Testis (tissue), 5 donors: ENCODE measurements at regions of chr1 and their contacts with region 1.

Region 1: GRCh38 chr1:204363335-204364124 is 3.8 kb upstream of the PLEKHA6 start:
- DNase-seq: peak; percentile 80
- H3K4me3 ChIP-seq: peak overlapping the region; percentile 16 to 60
- H3K27ac ChIP-seq: peak overlapping the region; percentile 16 to 57
- H3K4me1 ChIP-seq: peaks cover 20% of the 10 kb centered on the region
- H3K27me3 ChIP-seq: no peaks in the 10 kb centered on the region
- CTCF ChIP-seq: peak; percentile 91 to 96 (median 94)
- POLR2A ChIP-seq: no peak

Region 2: DNA sequence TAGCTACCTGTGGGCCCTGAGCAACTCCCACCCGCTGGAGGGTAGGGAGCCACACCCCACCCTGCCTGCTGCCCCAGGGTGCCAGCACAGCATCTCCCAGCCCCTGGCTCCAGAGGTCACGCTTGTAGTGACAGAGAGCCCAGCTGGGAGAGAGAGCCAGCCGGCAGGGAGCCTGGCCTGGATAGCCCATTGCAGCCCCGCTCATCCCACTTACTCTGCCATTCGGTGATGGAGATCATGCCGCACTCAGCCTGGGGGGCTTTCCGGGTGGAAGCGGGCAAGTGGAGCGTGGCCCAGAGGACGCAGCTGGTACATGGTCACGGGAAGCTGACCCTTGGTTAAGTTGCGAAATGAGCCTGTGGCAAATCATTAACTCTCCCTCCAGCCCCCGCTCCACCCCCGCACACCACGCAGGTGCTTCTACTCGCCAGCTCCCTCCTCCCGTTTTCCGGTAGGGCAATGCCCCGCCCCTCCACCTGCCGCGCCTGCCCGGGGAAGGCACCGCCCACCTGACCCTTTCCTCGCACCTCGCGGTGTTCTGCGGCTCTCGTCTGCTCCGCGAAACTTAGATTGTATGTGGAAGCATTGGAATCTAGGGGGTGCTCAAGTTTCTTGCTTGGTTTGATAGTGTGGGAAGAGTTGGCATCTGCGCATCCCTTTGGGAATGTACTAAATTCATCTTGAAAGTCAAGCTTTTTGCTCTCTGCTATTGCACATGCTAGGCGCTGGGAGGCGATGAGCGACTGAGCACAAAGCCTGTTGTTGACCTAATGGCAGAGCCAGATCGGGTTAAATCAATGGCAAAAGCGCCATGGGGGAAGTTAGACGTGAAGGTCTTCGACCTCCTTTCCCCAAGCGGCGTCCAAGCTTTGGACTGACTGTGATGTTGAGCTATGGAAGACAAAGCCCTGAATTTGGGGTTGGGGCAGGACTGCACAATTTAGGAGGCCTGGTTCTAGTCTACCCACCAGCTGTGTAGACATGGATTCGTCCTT is 149.6 kb before region 1 on chr1 and contains the start of gene GOLT1A:
- intact Hi-C with region 1: loop called (anchors 5 kb)
- DNase-seq: peak; percentile 74
- H3K4me3 ChIP-seq: peak within 1 kb of the TSS; percentile 17 to 49
- H3K27ac ChIP-seq: no peak within 1 kb of the TSS
- H3K4me1 ChIP-seq: peaks cover 7% of the 10 kb centered on the region
- H3K27me3 ChIP-seq: no peaks in the 10 kb centered on the region
- CTCF ChIP-seq: peak; percentile 47 to 75 (median 59)
- POLR2A ChIP-seq: no peak
- total RNA-seq, gene GOLT1A: 1.5 to 2.2 TPM